Posterior vena cava (tissue), 2 donors: ENCODE measurements at regions of chr4 and their contacts with region 1.

Region 1: GRCh38 chr4:107930821-107931774 is at the start of gene CYP2U1:
- DNase-seq: peak; percentile 95
- total RNA-seq, gene CYP2U1: 12.2 to 13.2 TPM

Region 2: DNA sequence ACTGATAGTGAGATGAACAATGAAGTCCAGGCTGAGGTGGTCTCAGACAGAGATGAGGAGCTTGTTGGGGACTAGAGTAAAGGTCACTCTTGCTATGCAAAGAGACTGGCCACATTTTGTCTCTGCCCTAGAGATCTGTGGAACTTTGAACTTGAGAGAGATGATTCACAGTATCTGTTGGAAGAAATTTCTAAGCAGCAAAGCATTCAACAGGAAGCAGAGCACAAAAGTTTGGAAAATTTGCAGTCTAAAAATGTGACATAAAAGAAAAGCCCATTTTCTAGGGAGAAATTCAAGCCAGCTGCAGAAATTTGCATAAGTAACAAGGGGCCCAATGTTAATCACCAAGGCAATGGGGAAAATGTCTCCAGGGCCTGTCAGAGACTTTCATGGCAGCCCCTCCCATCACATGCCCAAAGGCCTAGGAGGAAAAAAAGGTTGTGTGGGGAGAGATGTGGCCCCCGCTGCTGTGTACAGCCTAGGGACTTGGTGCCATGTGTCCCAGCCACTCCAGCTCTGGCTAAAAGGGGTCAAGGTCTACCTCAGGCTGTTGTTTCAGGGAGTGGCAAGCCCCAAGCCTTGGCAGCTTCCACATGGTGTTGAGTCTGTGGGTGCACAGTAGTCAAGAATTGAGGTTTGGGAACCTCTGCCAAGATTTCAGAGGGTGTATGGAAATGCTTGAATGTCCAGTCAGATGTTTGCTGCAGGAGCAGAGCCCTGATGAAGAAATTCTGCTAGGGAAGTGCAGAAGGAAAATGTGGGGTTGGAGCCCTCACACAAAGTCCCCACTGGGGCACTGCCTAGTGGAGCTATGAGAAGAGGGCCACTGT is 1157.8 kb before region 1 on chr4:
- intact Hi-C with region 1: no loop called
- DNase-seq: peak; percentile 58

Region 3: GRCh38 chr4:107858158-107858742 is 72.8 kb before region 1 on chr4:
- intact Hi-C with region 1: loop called in 1 of 2 experiments (anchors 2 kb)
- DNase-seq: no peak

Region 4: DNA sequence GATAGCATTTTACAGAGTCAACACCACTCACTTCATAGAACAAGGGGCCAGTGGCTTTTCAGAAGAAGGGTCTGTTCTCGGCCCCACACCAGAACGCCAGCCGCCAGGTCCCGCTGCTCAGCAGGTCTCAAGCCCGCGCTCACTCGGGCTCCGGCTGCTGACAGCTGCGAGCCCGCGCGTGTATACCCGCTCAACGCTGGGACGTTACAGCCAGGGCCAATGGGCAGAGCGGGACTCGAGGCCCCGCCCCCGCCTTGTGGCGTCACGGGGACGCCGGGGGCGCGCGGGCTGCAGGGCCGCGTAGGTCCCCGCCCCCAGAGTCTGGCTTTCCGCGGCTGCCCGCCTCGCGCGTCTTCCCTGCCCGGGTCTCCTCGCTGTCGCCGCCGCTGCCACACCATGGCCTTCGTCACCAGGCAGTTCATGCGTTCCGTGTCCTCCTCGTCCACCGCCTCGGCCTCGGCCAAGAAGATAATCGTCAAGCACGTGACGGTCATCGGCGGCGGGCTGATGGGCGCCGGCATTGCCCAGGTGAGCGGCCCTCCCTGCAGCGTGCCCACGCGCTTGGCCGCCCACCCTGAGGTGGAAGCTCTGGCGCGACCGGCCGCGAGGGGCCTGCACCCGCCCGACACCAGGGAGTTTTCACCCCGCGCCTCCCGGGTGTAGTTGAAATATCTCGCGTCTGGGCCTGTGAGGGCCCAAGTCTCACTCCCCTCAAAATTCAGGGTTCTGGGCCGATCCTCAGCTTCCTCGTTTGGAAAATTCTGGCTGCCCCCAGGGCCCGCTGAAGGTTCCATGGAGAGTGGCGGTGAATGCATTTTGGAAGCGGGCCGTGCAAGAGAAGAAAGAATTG is 58.7 kb after region 1 on chr4 and contains the start of gene HADH:
- intact Hi-C with region 1: loop called in 1 of 2 experiments (anchors 10 kb)
- DNase-seq: peak; percentile 97
- total RNA-seq, gene HADH: 52.6 to 91.5 TPM